PC-9 (cell line): ENCODE measurements at regions of chr2 and their contacts with region 1.

Region 1: DNA sequence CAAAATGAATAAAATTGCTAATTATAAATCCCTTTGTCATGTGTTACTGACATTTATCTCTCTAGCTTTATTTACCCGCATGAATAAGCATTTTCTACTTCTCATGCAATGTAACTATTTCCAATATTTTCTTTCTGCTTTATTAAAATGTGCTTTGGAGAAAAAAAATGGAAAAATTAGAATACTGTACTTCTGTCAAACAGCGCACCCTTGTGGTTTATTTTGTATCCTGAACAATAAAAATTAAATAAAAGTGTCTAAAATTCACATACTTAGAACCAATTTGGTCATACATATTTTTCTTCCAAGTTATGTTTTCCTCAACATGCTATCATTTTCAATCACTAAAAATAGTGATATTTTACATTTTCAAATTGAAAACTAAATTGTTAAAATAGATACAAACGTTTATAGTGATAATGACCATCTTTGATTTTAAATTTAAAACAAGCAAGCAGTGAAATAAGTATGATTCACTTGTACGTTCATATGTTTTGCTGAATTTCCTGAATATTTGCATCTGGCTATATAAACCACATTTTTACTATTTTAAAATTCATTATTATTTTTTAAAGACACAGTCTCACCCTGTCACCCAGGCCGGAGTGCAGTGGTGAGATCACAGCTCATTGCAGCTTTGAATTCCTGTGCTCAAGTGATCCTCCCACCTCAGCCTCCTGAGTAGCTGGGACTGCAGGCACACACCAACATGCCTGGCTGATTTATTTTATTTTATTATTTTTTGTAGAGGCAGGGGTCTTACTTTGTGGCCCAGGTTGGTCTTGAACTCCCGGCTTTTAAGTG is 95.9 kb upstream of the GRB14 start:
- DNase-seq: no peak
- H3K4me3 ChIP-seq: no peak overlapping the region
- H3K27ac ChIP-seq: no peak overlapping the region
- H3K4me1 ChIP-seq: no peaks in the 10 kb centered on the region
- H3K27me3 ChIP-seq: no peaks in the 10 kb centered on the region
- CTCF ChIP-seq: peak; percentile 80

Region 2: DNA sequence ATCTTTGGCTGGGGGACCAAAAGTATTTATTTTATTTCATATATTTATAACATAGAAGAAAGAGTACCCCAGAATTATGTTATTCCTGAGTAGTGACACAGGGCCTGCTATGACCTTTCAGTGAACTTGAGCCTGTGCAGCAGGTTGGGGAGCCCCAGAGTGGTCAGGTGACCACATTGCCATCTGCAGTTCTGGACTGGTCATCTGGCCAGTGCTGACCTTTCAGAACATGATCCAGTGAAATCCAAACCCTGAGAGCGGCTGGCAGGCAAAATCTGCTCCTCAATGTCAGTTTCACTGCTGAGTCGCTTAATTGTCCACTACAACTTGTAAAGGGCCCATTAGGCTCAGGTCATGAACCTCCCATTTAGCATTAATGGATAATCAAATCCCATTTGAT is 1541.9 kb before region 1 on chr2:
- CTCF ChIA-PET with region 1: no interaction called
- POLR2A ChIA-PET with region 1: no interaction called
- intact Hi-C with region 1: loop called (anchors 5 kb)
- DNase-seq: no peak
- H3K4me3 ChIP-seq: no peak overlapping the region
- H3K27ac ChIP-seq: no peak overlapping the region
- H3K4me1 ChIP-seq: no peaks in the 10 kb centered on the region
- H3K27me3 ChIP-seq: no peaks in the 10 kb centered on the region
- CTCF ChIP-seq: no peak

Region 3: DNA sequence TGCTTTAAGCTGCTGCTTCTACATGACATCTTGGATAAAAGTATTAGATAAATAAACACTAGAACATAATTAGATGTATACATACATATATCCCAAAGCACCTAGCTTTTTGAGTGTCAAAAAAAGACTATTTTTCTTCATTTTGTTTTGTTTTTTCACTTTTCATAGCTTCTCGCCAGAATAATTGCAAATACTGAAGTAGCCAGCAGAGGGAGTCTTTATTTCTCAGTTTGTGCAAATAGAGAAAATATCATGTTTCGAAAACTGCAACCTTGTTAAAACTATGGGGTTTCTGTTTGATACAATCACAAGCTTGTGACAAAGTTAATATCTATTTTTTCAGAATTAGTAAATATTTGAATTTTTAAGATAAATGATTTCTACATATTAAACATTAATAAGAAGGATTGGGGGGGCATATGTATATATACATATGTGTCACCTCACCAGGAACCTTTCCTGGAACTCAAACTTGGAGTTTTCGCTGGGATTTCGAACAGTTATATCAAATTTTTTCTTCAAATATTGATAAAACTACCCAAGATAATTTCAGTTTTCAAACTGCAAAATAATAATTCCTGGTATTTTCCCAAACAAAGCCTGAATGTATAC is 156.9 kb before region 1 on chr2:
- CTCF ChIA-PET with region 1: no interaction called
- POLR2A ChIA-PET with region 1: no interaction called
- intact Hi-C with region 1: loop called (anchors 5 kb)
- DNase-seq: no peak
- H3K4me3 ChIP-seq: no peak overlapping the region
- H3K27ac ChIP-seq: no peak overlapping the region
- H3K4me1 ChIP-seq: no peaks in the 10 kb centered on the region
- H3K27me3 ChIP-seq: no peaks in the 10 kb centered on the region
- CTCF ChIP-seq: peak; percentile 75

Region 4: DNA sequence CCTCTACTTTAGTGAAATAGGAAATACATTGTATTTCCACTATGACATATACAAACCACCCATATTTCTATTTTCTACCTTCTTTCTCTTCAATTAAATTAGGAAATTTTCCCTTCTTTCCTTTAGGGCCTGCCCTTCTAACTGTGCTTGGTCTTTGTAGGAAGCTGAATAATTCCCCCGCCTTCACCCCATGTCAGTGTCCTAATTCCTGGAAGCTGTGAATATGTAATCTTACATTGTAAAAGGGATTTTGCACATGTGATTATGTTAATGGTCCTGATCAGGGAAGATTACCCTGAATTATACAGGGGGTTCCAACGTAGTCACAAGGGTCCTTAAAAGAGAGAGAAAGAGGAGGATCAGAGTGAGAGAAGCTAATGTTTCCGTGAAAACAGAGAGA is 136.2 kb before region 1 on chr2:
- CTCF ChIA-PET with region 1: no interaction called
- POLR2A ChIA-PET with region 1: no interaction called
- intact Hi-C with region 1: no loop called
- DNase-seq: no peak
- H3K4me3 ChIP-seq: no peak overlapping the region
- H3K27ac ChIP-seq: no peak overlapping the region
- H3K4me1 ChIP-seq: no peaks in the 10 kb centered on the region
- H3K27me3 ChIP-seq: no peaks in the 10 kb centered on the region
- CTCF ChIP-seq: no peak

Region 5: DNA sequence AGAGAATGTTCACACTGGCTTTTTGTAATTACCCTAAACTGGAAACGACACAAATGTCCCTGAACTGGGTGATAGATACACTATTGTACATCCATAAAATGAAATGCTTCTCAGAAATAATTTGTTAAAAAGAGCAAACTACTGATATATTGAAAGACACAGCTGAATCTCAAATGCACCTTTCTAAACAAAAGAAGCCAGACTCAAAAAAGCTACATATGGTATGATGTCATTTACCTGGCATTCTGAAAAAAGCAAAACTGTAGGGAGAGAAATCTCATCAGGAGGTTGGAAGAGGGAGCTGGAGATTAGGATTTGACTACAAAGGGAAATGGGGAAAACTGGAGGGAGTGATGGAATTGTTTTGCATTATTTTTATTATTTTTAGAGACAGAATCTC is 226.1 kb after region 1 on chr2:
- CTCF ChIA-PET with region 1: no interaction called
- POLR2A ChIA-PET with region 1: no interaction called
- intact Hi-C with region 1: no loop called
- DNase-seq: no peak
- H3K4me3 ChIP-seq: no peak overlapping the region
- H3K27ac ChIP-seq: no peak overlapping the region
- H3K4me1 ChIP-seq: no peaks in the 10 kb centered on the region
- H3K27me3 ChIP-seq: no peaks in the 10 kb centered on the region
- CTCF ChIP-seq: no peak